ENCODE measurements at regions of chr10 and their contacts with region 1.

Region 1: DNA sequence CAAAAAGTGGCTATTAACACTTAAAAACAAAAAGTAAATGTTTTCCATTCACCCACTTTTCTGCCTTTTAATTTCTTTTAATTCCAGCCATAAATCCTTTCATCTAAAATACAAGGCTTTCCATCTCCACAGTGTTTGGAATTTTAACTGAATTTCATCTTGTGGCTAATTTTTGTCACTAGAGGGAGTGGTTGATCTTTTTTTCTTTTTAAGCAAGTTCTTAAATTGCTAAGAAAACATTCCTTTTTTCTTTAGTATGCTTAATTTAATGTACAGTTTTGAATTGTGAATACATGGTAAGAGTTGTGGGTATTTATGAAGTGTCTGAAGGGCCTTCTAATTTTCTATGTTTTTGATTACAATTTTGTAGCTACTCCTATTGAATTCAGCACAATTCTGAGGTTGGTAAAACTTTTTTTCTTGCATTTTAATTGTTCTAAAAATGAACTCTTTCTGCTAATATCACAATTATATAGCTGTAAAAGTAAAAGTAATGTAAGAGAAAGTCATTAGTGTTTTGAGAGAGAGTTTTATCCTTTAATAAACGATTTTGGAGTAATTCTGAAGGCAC is 54.9 kb upstream of the ANK3 start:
- DNase-seq: peak; percentile 90
- ATAC-seq: no peak
- H3K4me3 ChIP-seq: no peak overlapping the region
- H3K27ac ChIP-seq: no peak overlapping the region
- H3K4me1 ChIP-seq: peaks cover 50% of the 10 kb centered on the region
- H3K27me3 ChIP-seq: no peaks in the 10 kb centered on the region
- CTCF ChIP-seq: peak; percentile 99

Region 2: DNA sequence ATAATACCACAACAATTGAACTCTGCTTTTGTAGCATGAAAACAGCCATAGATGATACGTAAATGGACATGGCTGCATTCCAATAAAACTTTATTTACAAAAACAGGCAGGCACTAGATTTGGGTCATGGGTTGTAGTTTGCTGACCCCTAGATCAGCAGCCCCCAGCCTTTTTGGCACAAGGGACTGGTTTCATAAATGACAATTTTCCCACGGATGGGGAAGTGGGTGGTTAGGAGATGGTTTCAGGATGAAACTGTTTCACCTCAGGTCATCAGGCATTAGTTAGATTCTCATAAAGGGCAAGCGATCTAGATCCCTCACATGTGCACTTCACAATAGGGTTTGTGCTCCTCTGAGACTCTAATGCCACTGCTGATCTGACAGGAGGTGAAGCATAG is 38.4 kb before region 1 on chr10:
- CTCF ChIA-PET with region 1: no interaction called
- POLR2A ChIA-PET with region 1: no interaction called
- intact Hi-C with region 1: no loop called
- DNase-seq: no peak
- ATAC-seq: no peak
- H3K4me3 ChIP-seq: no peak overlapping the region
- H3K27ac ChIP-seq: no peak overlapping the region
- H3K4me1 ChIP-seq: peaks cover 10% of the 10 kb centered on the region
- H3K27me3 ChIP-seq: no peaks in the 10 kb centered on the region
- CTCF ChIP-seq: no peak

Region 3: DNA sequence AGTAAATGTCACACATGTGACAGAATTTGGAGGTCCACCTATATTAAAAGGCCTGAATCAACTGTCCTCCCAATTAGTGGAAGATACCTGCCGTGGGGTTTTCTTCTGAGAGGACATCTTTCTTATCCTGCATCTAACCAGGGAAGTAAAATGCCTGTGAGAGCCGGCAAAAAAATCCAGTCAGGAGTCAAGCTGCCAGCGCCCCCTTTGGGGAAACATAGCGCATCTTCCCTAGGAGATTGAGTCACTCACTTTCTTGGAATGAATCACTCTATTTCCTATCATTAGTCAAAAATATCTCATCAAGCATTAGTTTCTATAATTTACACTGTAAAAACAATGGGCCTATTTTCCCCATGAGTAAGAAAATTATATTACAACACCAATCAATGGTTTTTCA is 11.5 kb after region 1 on chr10:
- CTCF ChIA-PET with region 1: no interaction called
- POLR2A ChIA-PET with region 1: no interaction called
- intact Hi-C with region 1: no loop called
- DNase-seq: peak; percentile 64
- ATAC-seq: peak; percentile 23; the same call in 1 of the 2 replicates
- H3K4me3 ChIP-seq: no peak overlapping the region
- H3K27ac ChIP-seq: no peak overlapping the region
- H3K4me1 ChIP-seq: peaks cover 20% of the 10 kb centered on the region
- H3K27me3 ChIP-seq: no peaks in the 10 kb centered on the region
- CTCF ChIP-seq: peak; percentile 68

Region 4: DNA sequence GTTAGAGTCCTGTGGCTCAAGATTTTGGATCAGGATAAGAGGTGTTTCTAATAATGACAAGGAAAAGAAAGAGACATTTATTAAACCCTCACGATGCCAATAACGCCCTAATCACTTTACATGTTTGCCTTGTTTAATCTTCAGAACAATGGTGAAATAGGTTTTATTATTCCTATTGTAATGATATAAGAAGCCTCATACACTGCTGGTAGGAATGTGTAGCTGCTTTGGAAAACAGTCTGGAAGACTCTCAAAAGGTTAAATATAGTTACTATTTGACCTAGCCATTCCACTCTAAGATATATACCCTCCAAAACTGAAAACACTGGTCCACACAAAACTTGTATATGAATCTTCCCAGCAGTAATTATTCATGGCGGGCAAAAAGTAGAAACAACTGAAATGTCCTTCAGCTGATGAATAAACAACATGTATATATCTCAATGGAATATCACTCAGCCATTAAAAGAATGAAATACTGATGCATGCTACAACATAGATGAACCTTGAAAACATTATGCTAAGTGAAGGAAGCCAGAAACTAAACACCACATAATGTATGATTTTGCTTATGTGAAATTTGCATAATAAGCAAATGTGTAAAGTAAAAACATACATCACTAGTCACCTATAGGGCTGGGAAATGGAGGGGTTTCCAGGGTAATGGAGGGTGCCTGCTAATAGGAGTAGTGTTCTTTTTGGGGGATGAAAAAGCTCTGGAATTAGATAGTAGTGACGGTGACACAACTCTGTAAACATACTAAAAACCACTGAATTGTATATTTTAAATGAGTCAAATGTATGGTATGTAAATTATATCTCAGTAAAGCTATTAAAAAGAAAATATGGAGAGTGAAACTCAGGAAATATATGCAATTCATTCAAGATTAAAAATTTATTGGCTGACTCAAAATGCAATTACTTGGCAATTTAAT is 22.0 kb after region 1 on chr10:
- CTCF ChIA-PET with region 1: interaction called, 4 read pairs
- POLR2A ChIA-PET with region 1: no interaction called
- intact Hi-C with region 1: loop called (anchors 1 kb)
- DNase-seq: peak; percentile 99
- ATAC-seq: peak; percentile 80
- H3K4me3 ChIP-seq: peak overlapping the region; percentile 58
- H3K27ac ChIP-seq: peak overlapping the region; percentile 93
- H3K4me1 ChIP-seq: peaks cover 51% of the 10 kb centered on the region
- H3K27me3 ChIP-seq: no peaks in the 10 kb centered on the region
- CTCF ChIP-seq: no peak; the same call in 1 of the 2 replicates

Region 5: GRCh38 chr10:60536529-60537114 is 92.0 kb after region 1 on chr10:
- CTCF ChIA-PET with region 1: no interaction called
- POLR2A ChIA-PET with region 1: no interaction called
- intact Hi-C with region 1: loop called (anchors 1 kb)
- DNase-seq: peak; percentile 98
- ATAC-seq: peak; percentile 86
- H3K4me3 ChIP-seq: peak overlapping the region; percentile 8
- H3K27ac ChIP-seq: peak overlapping the region; percentile 59
- H3K4me1 ChIP-seq: peaks cover 54% of the 10 kb centered on the region
- H3K27me3 ChIP-seq: no peaks in the 10 kb centered on the region
- CTCF ChIP-seq: no peak; the same call in 1 of the 2 replicates

Region 6: DNA sequence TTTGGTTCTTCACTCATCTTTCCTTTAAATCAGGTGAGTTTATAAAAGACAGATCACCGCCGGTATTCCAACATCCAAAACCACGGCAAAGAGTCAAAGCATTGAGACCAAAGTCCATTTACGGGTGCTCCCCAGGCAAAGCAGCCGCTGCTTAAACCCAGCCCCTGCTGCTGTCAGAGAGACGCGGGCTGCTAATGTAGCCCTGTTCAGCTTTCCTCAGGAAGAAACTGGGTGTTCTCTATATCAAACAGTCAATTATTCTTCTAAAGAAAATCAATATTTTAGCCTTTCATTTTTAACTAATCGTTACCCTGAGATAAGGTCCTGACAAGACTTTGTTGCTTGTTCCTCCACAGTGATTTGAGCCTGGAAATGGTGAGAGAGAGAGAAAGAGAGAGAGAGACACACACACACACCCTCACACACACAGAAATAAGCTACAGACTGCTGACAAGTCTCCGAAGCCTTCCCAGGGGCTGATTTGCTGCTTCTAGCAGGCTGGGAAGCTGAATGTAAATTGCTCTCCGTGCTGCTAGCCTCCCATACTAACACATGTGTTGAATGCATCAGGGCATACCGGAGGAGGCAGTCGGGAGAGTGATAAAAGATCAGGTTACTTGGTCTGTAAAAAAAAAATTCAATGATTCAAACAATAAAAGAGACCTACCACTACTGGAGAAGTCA is 128.1 kb after region 1 on chr10:
- CTCF ChIA-PET with region 1: interaction called, 3 read pairs
- POLR2A ChIA-PET with region 1: no interaction called
- intact Hi-C with region 1: loop called (anchors 1 kb)
- DNase-seq: peak; percentile 95
- ATAC-seq: peak; percentile 84
- H3K4me3 ChIP-seq: peak overlapping the region; percentile 70
- H3K27ac ChIP-seq: peak overlapping the region; percentile 48
- H3K4me1 ChIP-seq: peaks cover 65% of the 10 kb centered on the region
- H3K27me3 ChIP-seq: no peaks in the 10 kb centered on the region
- CTCF ChIP-seq: 0 out of 2 replicates have a peak, but pooled peaks have one; percentile 11

Region 7: DNA sequence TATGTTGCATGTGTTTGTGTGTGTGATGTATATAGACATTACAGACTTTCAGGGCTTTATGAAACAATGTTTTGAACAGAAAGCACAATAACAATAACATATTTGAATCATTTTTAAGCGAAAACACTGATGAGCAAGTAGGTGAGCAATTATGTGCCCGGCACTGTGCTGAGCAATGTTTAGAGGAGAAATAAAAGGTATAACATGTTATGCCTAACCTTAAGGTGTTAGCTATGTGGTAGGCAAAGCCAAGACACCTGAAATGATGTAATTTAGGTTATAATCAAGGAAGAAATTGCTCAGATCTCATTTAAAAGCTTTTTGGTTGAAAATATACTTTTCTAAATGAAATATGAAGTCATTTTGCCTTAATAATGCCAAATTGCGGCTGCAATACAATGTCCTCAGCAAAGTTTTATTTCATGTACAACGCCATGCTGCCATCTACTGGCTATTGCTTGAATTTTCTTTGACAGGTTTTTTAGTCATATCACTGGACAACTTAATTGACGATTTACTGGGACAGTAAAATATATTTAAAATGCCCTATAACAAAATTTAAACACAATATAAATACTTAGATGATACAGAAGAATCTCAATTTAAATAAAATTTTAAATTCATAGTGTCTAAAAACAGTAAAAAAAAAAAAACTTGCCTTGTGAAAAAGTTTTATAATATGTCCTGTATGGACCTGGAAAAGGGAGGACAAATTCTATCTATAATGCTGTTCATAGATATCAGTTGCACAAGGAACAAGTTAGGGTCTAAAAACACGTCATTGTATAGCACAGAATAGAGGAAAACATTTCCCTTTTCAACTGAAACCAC is 202.6 kb after region 1 on chr10:
- CTCF ChIA-PET with region 1: interaction called, 11 read pairs
- POLR2A ChIA-PET with region 1: interaction called, 3 read pairs
- intact Hi-C with region 1: loop called (anchors 1 kb)
- DNase-seq: peak; percentile 98
- ATAC-seq: peak; percentile 27
- H3K4me3 ChIP-seq: no peak overlapping the region
- H3K27ac ChIP-seq: no peak overlapping the region
- H3K4me1 ChIP-seq: peaks cover 39% of the 10 kb centered on the region
- H3K27me3 ChIP-seq: no peaks in the 10 kb centered on the region
- CTCF ChIP-seq: peak; percentile 99

Measured in PC-3 (cell line).